ENCODE measurements at regions of chr17 and their contacts with region 1.

Region 1: GRCh38 chr17:64984851-64985521 is 65.7 kb upstream of the LRRC37A3 start:
- DNase-seq: peak; percentile 74 to 94 (median 84)
- H3K4me3 ChIP-seq: peak overlapping the region; percentile 19 to 30
- H3K4me3 Mint-ChIP-seq: peak overlapping the region; percentile 71 to 87 (median 82)
- H3K27ac ChIP-seq: peak overlapping the region; percentile 92
- H3K27ac Mint-ChIP-seq: peak overlapping the region; percentile 98 to 100 (median 99)
- H3K4me1 ChIP-seq: peaks cover 54% of the 10 kb centered on the region
- H3K4me1 Mint-ChIP-seq: peaks cover 32 to 54% (median 45%) of the 10 kb centered on the region in 4 donors
- H3K27me3 ChIP-seq: no peaks in the 10 kb centered on the region
- H3K27me3 Mint-ChIP-seq: no peaks in the 10 kb centered on the region

Region 2: GRCh38 chr17:64773836-64774761 is 210.9 kb before region 1 on chr17:
- CTCF ChIA-PET with region 1: no interaction called
- POLR2A ChIA-PET with region 1: no interaction called
- intact Hi-C with region 1: no loop called
- DNase-seq: no peak
- H3K4me3 ChIP-seq: no peak overlapping the region
- H3K4me3 Mint-ChIP-seq: no peak overlapping the region
- H3K27ac ChIP-seq: no peak overlapping the region
- H3K27ac Mint-ChIP-seq: no peak overlapping the region
- H3K4me1 ChIP-seq: peaks cover 10% of the 10 kb centered on the region
- H3K4me1 Mint-ChIP-seq: peaks cover 6 to 32% (median 15%) of the 10 kb centered on the region in 4 donors
- H3K27me3 ChIP-seq: no peaks in the 10 kb centered on the region
- H3K27me3 Mint-ChIP-seq: no peaks in the 10 kb centered on the region

Region 3: GRCh38 chr17:64968652-64969501 is 16.1 kb before region 1 on chr17:
- CTCF ChIA-PET with region 1: interaction called, 9 read pairs
- POLR2A ChIA-PET with region 1: interaction called, 183 read pairs
- intact Hi-C with region 1: loop called (anchors 2 kb)
- DNase-seq: peak; percentile 45 to 71 (median 47)
- H3K4me3 ChIP-seq: no peak overlapping the region
- H3K4me3 Mint-ChIP-seq: peak overlapping the region; percentile 69 to 92 (median 80)
- H3K27ac ChIP-seq: peak overlapping the region; percentile 62
- H3K27ac Mint-ChIP-seq: peak overlapping the region; percentile 92 to 99 (median 97)
- H3K4me1 ChIP-seq: peaks cover 77% of the 10 kb centered on the region
- H3K4me1 Mint-ChIP-seq: peaks cover 35 to 79% (median 59%) of the 10 kb centered on the region in 4 donors
- H3K27me3 ChIP-seq: no peaks in the 10 kb centered on the region
- H3K27me3 Mint-ChIP-seq: no peaks in the 10 kb centered on the region

Region 4: GRCh38 chr17:65013613-65014391 is 28.8 kb after region 1 on chr17:
- CTCF ChIA-PET with region 1: interaction called, 3 read pairs
- POLR2A ChIA-PET with region 1: interaction called, 20 read pairs
- intact Hi-C with region 1: no loop called
- DNase-seq: peak; percentile 20 to 74 (median 35)
- H3K4me3 ChIP-seq: no peak overlapping the region
- H3K4me3 Mint-ChIP-seq: peak overlapping the region in 6 of 8 donors; percentile 2 to 52 (median 26)
- H3K27ac ChIP-seq: no peak overlapping the region
- H3K27ac Mint-ChIP-seq: peak overlapping the region; percentile 26 to 91 (median 89)
- H3K4me1 ChIP-seq: peaks cover 43% of the 10 kb centered on the region
- H3K4me1 Mint-ChIP-seq: peaks cover 55 to 91% (median 68%) of the 10 kb centered on the region in 4 donors
- H3K27me3 ChIP-seq: no peaks in the 10 kb centered on the region
- H3K27me3 Mint-ChIP-seq: no peaks in the 10 kb centered on the region

Region 5: DNA sequence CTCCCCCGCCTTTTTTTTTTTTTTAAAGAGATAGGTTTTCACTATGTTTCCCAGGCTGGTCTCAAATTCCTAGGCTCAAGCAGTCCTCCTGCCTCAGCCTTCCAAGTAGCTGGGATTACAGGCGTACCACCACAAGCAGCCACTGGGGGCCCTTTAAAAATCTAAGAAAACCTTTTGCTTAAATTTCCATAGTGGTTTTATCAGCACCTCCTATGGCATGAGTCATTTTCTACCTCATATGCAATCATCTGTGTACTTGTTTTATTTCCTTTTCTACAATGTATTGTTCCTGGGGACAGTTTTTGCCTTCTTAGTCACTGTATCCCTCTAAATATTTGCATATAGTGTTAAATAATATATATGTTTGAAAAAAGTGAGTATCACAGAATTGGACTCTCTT is 42.3 kb after region 1 on chr17:
- CTCF ChIA-PET with region 1: no interaction called
- POLR2A ChIA-PET with region 1: interaction called, 17 read pairs
- intact Hi-C with region 1: loop called (anchors 5 kb)
- DNase-seq: peak; percentile 55 to 79 (median 58)
- H3K4me3 ChIP-seq: no peak overlapping the region
- H3K4me3 Mint-ChIP-seq: peak overlapping the region; percentile 75 to 90 (median 87)
- H3K27ac ChIP-seq: peak overlapping the region; percentile 49
- H3K27ac Mint-ChIP-seq: peak overlapping the region; percentile 90 to 98 (median 96)
- H3K4me1 ChIP-seq: peaks cover 99% of the 10 kb centered on the region
- H3K4me1 Mint-ChIP-seq: peaks cover 61 to 94% (median 78%) of the 10 kb centered on the region in 4 donors
- H3K27me3 ChIP-seq: no peaks in the 10 kb centered on the region
- H3K27me3 Mint-ChIP-seq: no peaks in the 10 kb centered on the region

Region 6: GRCh38 chr17:65039336-65039988 is 54.5 kb after region 1 on chr17:
- CTCF ChIA-PET with region 1: interaction called, 3 read pairs
- POLR2A ChIA-PET with region 1: interaction called, 36 read pairs
- intact Hi-C with region 1: no loop called
- DNase-seq: peak; percentile 78 to 89 (median 85)
- H3K4me3 ChIP-seq: peak overlapping the region; percentile 29 to 57
- H3K4me3 Mint-ChIP-seq: peak overlapping the region; percentile 74 to 92 (median 78)
- H3K27ac ChIP-seq: peak overlapping the region; percentile 87
- H3K27ac Mint-ChIP-seq: peak overlapping the region; percentile 82 to 99 (median 97)
- H3K4me1 ChIP-seq: peaks cover 98% of the 10 kb centered on the region
- H3K4me1 Mint-ChIP-seq: peaks cover 66 to 91% (median 77%) of the 10 kb centered on the region in 4 donors
- H3K27me3 ChIP-seq: no peaks in the 10 kb centered on the region
- H3K27me3 Mint-ChIP-seq: no peaks in the 10 kb centered on the region

Measured in CD4-positive, alpha-beta memory T cell (primary cell).